ENCODE measurements at regions of chr2 and their contacts with region 1.

Region 1: GRCh38 chr2:186460465-186460864 is 25.6 kb upstream of the ZC3H15 start:
- DNase-seq: peak in 1 of 2 experiments; percentile 43
- H3K4me3 ChIP-seq: no peak overlapping the region
- H3K4me3 Mint-ChIP-seq: no peak overlapping the region
- H3K27ac Mint-ChIP-seq: no peak overlapping the region
- H3K4me1 ChIP-seq: no peaks in the 10 kb centered on the region
- H3K4me1 Mint-ChIP-seq: peaks cover 5% of the 10 kb centered on the region
- H3K27me3 ChIP-seq: no peaks in the 10 kb centered on the region
- H3K27me3 Mint-ChIP-seq: no peaks in the 10 kb centered on the region
- CTCF ChIP-seq: peak; percentile 35 to 43

Region 2: DNA sequence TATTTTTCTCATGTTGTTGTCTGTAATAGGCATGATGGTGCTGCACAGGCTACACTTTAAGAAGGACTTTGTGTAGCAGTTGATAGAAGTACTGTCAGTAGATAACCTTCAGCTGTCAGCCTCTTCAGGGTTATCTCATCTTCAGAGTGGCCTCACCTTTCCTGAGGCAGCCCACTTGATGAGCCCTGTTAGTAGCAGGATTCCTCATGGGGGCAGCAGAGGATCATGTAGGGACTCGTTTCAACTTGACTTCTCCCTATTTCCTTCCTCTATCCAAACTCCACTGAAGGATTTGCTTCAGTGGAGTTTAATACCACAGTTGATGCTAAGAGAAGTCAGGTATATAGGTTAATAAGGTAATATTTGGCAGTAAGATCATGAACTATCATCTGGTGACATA is 1252.2 kb before region 1 on chr2:
- CTCF ChIA-PET with region 1: no interaction called
- POLR2A ChIA-PET with region 1: no interaction called
- intact Hi-C with region 1: loop called (anchors 1 kb)
- DNase-seq: peak; percentile 77 to 78
- H3K4me3 ChIP-seq: no peak overlapping the region
- H3K4me3 Mint-ChIP-seq: no peak overlapping the region
- H3K27ac Mint-ChIP-seq: no peak overlapping the region
- H3K4me1 ChIP-seq: no peaks in the 10 kb centered on the region
- H3K4me1 Mint-ChIP-seq: no peaks in the 10 kb centered on the region
- H3K27me3 ChIP-seq: no peaks in the 10 kb centered on the region; the same call in 1 of the 2 replicates
- H3K27me3 Mint-ChIP-seq: no peaks in the 10 kb centered on the region
- CTCF ChIP-seq: peak; percentile 73 to 84

Region 3: GRCh38 chr2:185291035-185291647 is 1169.3 kb before region 1 on chr2:
- CTCF ChIA-PET with region 1: no interaction called
- POLR2A ChIA-PET with region 1: no interaction called
- intact Hi-C with region 1: loop called (anchors 1 kb)
- DNase-seq: peak; percentile 72 to 79
- H3K4me3 ChIP-seq: no peak overlapping the region
- H3K4me3 Mint-ChIP-seq: no peak overlapping the region
- H3K27ac Mint-ChIP-seq: no peak overlapping the region
- H3K4me1 ChIP-seq: no peaks in the 10 kb centered on the region; the same call in 1 of the 2 replicates
- H3K4me1 Mint-ChIP-seq: peaks cover 5% of the 10 kb centered on the region
- H3K27me3 ChIP-seq: no peaks in the 10 kb centered on the region
- H3K27me3 Mint-ChIP-seq: no peaks in the 10 kb centered on the region
- CTCF ChIP-seq: peak; percentile 71 to 83

Region 4: DNA sequence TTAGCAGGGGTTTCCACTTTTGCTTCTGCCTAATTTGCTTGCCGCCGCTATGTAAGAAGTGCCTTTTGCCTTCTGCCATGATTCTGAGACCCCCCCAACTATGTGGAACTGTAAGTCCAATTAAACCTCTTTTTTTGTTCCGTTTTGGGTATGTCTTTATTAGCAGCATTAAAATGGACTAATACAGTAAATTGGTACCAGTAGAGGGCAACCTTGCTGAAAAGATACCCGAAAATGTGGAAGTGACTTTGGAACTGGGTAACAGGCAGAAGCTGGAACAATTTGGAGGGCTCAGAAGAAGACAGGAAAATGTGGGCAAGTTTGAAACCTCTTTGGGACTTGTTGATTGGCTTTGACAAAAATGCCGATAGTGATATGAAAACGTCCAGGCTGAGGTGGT is 938.0 kb before region 1 on chr2:
- CTCF ChIA-PET with region 1: no interaction called
- POLR2A ChIA-PET with region 1: no interaction called
- intact Hi-C with region 1: loop called (anchors 10 kb)
- DNase-seq: no peak
- H3K4me3 ChIP-seq: no peak overlapping the region
- H3K4me3 Mint-ChIP-seq: no peak overlapping the region
- H3K27ac Mint-ChIP-seq: no peak overlapping the region
- H3K4me1 ChIP-seq: no peaks in the 10 kb centered on the region
- H3K4me1 Mint-ChIP-seq: no peaks in the 10 kb centered on the region
- H3K27me3 ChIP-seq: no peaks in the 10 kb centered on the region
- H3K27me3 Mint-ChIP-seq: no peaks in the 10 kb centered on the region
- CTCF ChIP-seq: peak; percentile 8 to 16

Region 5: DNA sequence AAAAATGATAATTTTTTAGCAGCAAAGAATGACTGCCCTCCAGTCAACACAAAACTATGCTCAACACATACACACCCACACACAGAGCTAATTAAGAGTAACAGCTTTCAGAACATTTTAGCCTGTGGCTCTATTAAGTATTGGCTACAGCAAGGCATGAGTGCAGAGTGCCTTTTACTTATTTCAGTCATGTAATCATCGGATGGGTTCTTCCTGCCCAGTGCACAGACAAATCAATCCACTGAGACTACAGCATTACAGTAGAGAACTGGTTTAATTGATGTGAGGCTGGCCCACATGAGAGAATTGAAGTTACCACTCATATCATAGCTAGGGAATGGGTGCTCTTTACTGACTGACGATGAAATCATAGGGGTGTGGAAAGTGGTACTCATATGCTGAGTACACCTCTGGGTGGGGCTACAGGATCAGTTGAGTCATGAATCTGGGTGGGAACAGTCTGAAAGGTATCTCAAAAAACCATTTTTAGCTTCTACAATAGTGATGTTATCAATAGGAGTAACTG is 480.9 kb before region 1 on chr2:
- CTCF ChIA-PET with region 1: no interaction called
- POLR2A ChIA-PET with region 1: no interaction called
- intact Hi-C with region 1: loop called (anchors 1 kb)
- DNase-seq: peak in 1 of 2 experiments; percentile 45
- H3K4me3 ChIP-seq: no peak overlapping the region
- H3K4me3 Mint-ChIP-seq: no peak overlapping the region
- H3K27ac Mint-ChIP-seq: no peak overlapping the region
- H3K4me1 ChIP-seq: 0 out of 2 replicates have a peak, but pooled peaks cover 4% of the 10 kb centered on the region
- H3K4me1 Mint-ChIP-seq: peaks cover 7% of the 10 kb centered on the region
- H3K27me3 ChIP-seq: no peaks in the 10 kb centered on the region
- H3K27me3 Mint-ChIP-seq: no peaks in the 10 kb centered on the region
- CTCF ChIP-seq: no peak

Region 6: DNA sequence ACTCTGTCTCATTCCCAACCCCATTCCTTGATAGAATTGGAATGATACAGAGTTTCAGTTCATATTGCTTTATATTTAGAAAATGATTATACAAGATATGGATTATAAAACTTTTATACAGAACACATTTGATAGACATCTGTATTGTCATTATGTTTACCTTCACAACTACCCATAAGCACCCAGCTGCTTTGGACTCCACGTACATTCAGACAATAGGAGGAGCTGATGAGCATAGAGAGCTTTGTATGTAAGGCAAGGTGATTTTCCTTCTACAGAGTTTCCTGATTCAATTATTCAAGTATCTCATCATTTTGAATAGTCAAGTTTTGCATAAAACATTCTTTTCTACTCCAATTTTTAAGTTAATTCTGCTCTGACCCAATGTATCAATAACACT is 293.3 kb before region 1 on chr2:
- CTCF ChIA-PET with region 1: no interaction called
- POLR2A ChIA-PET with region 1: no interaction called
- intact Hi-C with region 1: loop called (anchors 1 kb)
- DNase-seq: no peak
- H3K4me3 ChIP-seq: no peak overlapping the region
- H3K4me3 Mint-ChIP-seq: no peak overlapping the region
- H3K27ac Mint-ChIP-seq: no peak overlapping the region
- H3K4me1 ChIP-seq: no peaks in the 10 kb centered on the region
- H3K4me1 Mint-ChIP-seq: no peaks in the 10 kb centered on the region
- H3K27me3 ChIP-seq: no peaks in the 10 kb centered on the region
- H3K27me3 Mint-ChIP-seq: no peaks in the 10 kb centered on the region
- CTCF ChIP-seq: no peak

Region 7: GRCh38 chr2:186641807-186642321 is 181.4 kb after region 1 on chr2:
- CTCF ChIA-PET with region 1: no interaction called
- POLR2A ChIA-PET with region 1: no interaction called
- intact Hi-C with region 1: loop called (anchors 1 kb)
- DNase-seq: peak; percentile 45 to 67
- H3K4me3 ChIP-seq: no peak overlapping the region
- H3K4me3 Mint-ChIP-seq: no peak overlapping the region
- H3K27ac Mint-ChIP-seq: no peak overlapping the region
- H3K4me1 ChIP-seq: no peaks in the 10 kb centered on the region
- H3K4me1 Mint-ChIP-seq: peaks cover 14% of the 10 kb centered on the region
- H3K27me3 ChIP-seq: no peaks in the 10 kb centered on the region
- H3K27me3 Mint-ChIP-seq: no peaks in the 10 kb centered on the region
- CTCF ChIP-seq: peak; percentile 60 to 82

Region 8: GRCh38 chr2:186653511-186653910 is 193.0 kb after region 1 on chr2:
- CTCF ChIA-PET with region 1: no interaction called
- POLR2A ChIA-PET with region 1: no interaction called
- intact Hi-C with region 1: no loop called
- DNase-seq: no peak
- H3K4me3 ChIP-seq: no peak overlapping the region
- H3K4me3 Mint-ChIP-seq: no peak overlapping the region
- H3K27ac Mint-ChIP-seq: no peak overlapping the region
- H3K4me1 ChIP-seq: no peaks in the 10 kb centered on the region
- H3K4me1 Mint-ChIP-seq: no peaks in the 10 kb centered on the region
- H3K27me3 ChIP-seq: no peaks in the 10 kb centered on the region
- H3K27me3 Mint-ChIP-seq: no peaks in the 10 kb centered on the region
- CTCF ChIP-seq: no peak

Measured in Caco-2 (cell line).